ENCODE measurements at regions of chr2 and their contacts with region 1.

Region 1: DNA sequence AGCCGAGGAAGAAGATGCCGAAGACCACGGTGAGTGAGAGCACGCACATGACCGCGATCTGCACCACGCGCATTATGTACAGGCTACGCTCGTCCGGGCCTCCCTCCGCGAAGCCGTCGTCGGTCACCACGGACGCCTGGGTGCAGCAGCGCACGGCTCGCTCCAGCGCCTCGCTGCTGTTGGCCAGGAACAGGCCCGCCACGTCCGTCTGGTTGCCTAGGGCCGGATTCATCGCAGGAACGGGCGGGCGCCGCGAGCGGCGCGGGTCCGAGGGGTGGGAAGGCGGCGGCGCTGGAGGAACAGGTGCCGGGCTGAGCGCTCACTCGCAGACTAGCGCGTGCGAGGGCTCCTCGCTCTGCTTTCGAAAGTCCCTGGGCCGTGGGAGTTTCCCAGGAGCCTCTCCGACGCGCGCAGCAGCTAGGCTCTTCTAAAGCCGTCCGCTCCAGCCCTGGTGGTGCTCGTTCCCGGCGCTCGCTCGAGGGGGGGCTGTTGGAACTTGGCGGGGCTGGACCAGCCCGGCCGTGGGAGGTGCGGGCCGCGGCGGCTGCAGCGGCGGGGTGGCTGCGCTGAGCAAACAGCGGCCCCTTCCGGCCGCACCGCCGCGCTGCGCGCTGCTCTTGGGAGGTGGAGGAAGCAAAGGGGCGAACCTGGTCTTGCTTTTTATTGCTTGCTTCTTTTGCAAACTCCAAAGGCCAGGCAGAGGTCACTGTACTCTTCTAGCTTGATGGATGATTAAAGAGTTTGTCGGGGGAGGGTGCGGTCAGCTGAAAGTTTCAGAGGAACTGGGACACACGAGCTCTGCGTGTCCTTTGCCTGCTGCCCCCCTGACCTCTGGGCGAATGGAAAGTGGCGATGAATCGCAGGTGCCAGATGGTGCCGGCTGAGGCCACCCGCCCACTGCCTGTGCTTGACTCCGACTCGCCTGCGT is at the start of gene RPRM:
- DNase-seq: peak; percentile 66
- H3K4me3 ChIP-seq: peak within 1 kb of the TSS; percentile 36 to 54 (median 48)
- H3K27ac ChIP-seq: peak within 1 kb of the TSS in 3 of 4 donors; percentile 51 to 79 (median 59)
- H3K4me1 ChIP-seq: peaks cover 3 to 25% (median 19%) of the 10 kb centered on the region in 4 donors
- H3K27me3 ChIP-seq: peaks cover 70% of the 10 kb centered on the region
- CTCF ChIP-seq: peak; percentile 45 to 85 (median 75)
- EP300 ChIP-seq: no peak
- POLR2A ChIP-seq: no peak
- total RNA-seq, gene RPRM: 2.0 to 3.2 TPM in 2 of 4 donors, not detected in the others

Region 2: GRCh38 chr2:153163058-153163457 is 315.5 kb before region 1 on chr2:
- in situ Hi-C with region 1: loop called in 1 of 4 experiments (anchors 25 kb)
- intact Hi-C with region 1: no loop called
- DNase-seq: no peak
- H3K4me3 ChIP-seq: no peak overlapping the region
- H3K27ac ChIP-seq: no peak overlapping the region
- H3K4me1 ChIP-seq: no peaks in the 10 kb centered on the region
- H3K27me3 ChIP-seq: no peaks in the 10 kb centered on the region
- CTCF ChIP-seq: peak in 4 of 5 experiments; percentile 45 to 54 (median 46)
- EP300 ChIP-seq: no peak
- POLR2A ChIP-seq: no peak